Psoas muscle (tissue), 8 donors: ENCODE measurements at regions of chr14 and their contacts with region 1.

Region 1: GRCh38 chr14:50003213-50004031 is 110.5 kb downstream of the ARF6 start:
- DNase-seq: peak; percentile 86 to 90
- ATAC-seq: peak in 3 of 4 donors; percentile 14 to 27 (median 21)
- H3K4me3 ChIP-seq: peak overlapping the region; percentile 73
- H3K27ac ChIP-seq: peak overlapping the region; percentile 94
- H3K4me1 ChIP-seq: peaks cover 48% of the 10 kb centered on the region
- H3K27me3 ChIP-seq: no peaks in the 10 kb centered on the region
- CTCF ChIP-seq: peak; percentile 16

Region 2: GRCh38 chr14:49892636-49893308 is 110.7 kb before region 1 on chr14 and contains the start of gene ARF6:
- intact Hi-C with region 1: loop called (anchors 2 kb)
- DNase-seq: peak; percentile 100
- ATAC-seq: peak; percentile 96 to 98 (median 97)
- H3K4me3 ChIP-seq: peak within 1 kb of the TSS; percentile 90
- H3K27ac ChIP-seq: peak within 1 kb of the TSS; percentile 99
- H3K4me1 ChIP-seq: peaks cover 35% of the 10 kb centered on the region
- H3K27me3 ChIP-seq: no peaks in the 10 kb centered on the region
- CTCF ChIP-seq: no peak
- total RNA-seq, gene ARF6: 19.0 to 37.4 (median 30.6) TPM

Region 3: DNA sequence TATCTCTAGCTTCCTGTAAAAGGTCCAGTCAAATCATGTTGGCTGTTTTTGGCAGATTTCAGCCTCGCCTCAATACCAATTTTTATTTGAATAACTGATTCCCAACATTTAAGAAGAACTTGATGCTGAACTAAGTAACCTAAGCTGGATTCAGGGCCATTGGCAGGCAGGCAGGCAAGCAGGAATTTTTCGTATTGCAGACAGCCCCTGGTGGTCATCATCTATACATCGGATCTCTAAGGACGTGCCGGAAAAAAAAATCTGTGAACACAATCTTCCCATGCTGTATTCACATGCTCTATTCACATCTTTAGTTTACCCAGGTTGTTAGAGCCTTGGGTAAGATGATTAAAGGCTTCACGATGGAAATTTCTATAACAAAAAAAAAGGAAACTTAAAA is 105.9 kb after region 1 on chr14:
- intact Hi-C with region 1: loop called in 1 of 2 experiments (anchors 5 kb)
- DNase-seq: no peak
- ATAC-seq: no peak
- H3K4me3 ChIP-seq: no peak overlapping the region
- H3K27ac ChIP-seq: no peak overlapping the region
- H3K4me1 ChIP-seq: peaks cover 4% of the 10 kb centered on the region
- H3K27me3 ChIP-seq: no peaks in the 10 kb centered on the region
- CTCF ChIP-seq: no peak